T-cell (primary cell): ENCODE measurements at regions of chr4 and their contacts with region 1.

Region 1: GRCh38 chr4:121091941-121092340 is 19.6 kb upstream of the NDNF start:
- DNase-seq: no peak
- ATAC-seq: no peak
- H3K4me3 ChIP-seq: no peak overlapping the region
- H3K4me3 Mint-ChIP-seq: no peak overlapping the region
- H3K27ac ChIP-seq: no peak overlapping the region
- H3K27ac Mint-ChIP-seq: no peak overlapping the region
- H3K4me1 ChIP-seq: no peaks in the 10 kb centered on the region
- H3K4me1 Mint-ChIP-seq: no peaks in the 10 kb centered on the region
- H3K27me3 ChIP-seq: no peaks in the 10 kb centered on the region
- H3K27me3 Mint-ChIP-seq: no peaks in the 10 kb centered on the region

Region 2: GRCh38 chr4:121016630-121017029 is 75.3 kb before region 1 on chr4:
- CTCF ChIA-PET with region 1: no interaction called
- POLR2A ChIA-PET with region 1: no interaction called
- DNase-seq: no peak
- ATAC-seq: no peak
- H3K4me3 ChIP-seq: no peak overlapping the region
- H3K4me3 Mint-ChIP-seq: no peak overlapping the region
- H3K27ac ChIP-seq: no peak overlapping the region
- H3K27ac Mint-ChIP-seq: no peak overlapping the region
- H3K4me1 ChIP-seq: peaks cover 0 to 6% of the 10 kb centered on the region in 2 experiments
- H3K4me1 Mint-ChIP-seq: peaks cover 12 to 24% (median 23%) of the 10 kb centered on the region in 3 donors
- H3K27me3 ChIP-seq: no peaks in the 10 kb centered on the region
- H3K27me3 Mint-ChIP-seq: peaks cover 0 to 6% of the 10 kb centered on the region in 2 donors

Region 3: GRCh38 chr4:121139533-121140222 is 47.7 kb after region 1 on chr4:
- CTCF ChIA-PET with region 1: no interaction called
- POLR2A ChIA-PET with region 1: no interaction called
- DNase-seq: peak in 4 of 35 experiments; percentile 14 to 55 (median 18)
- ATAC-seq: peak; percentile 64 to 89 (median 71)
- H3K4me3 ChIP-seq: no peak overlapping the region
- H3K4me3 Mint-ChIP-seq: peak overlapping the region in 1 of 3 donors; percentile 57
- H3K27ac ChIP-seq: peak overlapping the region; percentile 72
- H3K27ac Mint-ChIP-seq: peak overlapping the region; percentile 88 to 89
- H3K4me1 ChIP-seq: peaks cover 19 to 32% of the 10 kb centered on the region in 2 experiments
- H3K4me1 Mint-ChIP-seq: peaks cover 42 to 63% (median 51%) of the 10 kb centered on the region in 3 donors
- H3K27me3 ChIP-seq: no peaks in the 10 kb centered on the region
- H3K27me3 Mint-ChIP-seq: no peaks in the 10 kb centered on the region

Region 4: GRCh38 chr4:121156822-121157769 is 65.2 kb after region 1 on chr4:
- CTCF ChIA-PET with region 1: interaction called in 1 of 2 experiments, 13 read pairs
- POLR2A ChIA-PET with region 1: no interaction called
- DNase-seq: peak in 21 of 35 experiments; percentile 5 to 51 (median 23)
- ATAC-seq: peak; percentile 11 to 58 (median 38)
- H3K4me3 ChIP-seq: peak overlapping the region; percentile 61 to 88
- H3K4me3 Mint-ChIP-seq: peak overlapping the region; percentile 88 to 97 (median 88)
- H3K27ac ChIP-seq: peak overlapping the region; percentile 73
- H3K27ac Mint-ChIP-seq: peak overlapping the region; percentile 83 to 93
- H3K4me1 ChIP-seq: peaks cover 32 to 50% of the 10 kb centered on the region in 2 experiments
- H3K4me1 Mint-ChIP-seq: peaks cover 48 to 62% (median 54%) of the 10 kb centered on the region in 3 donors
- H3K27me3 ChIP-seq: no peaks in the 10 kb centered on the region
- H3K27me3 Mint-ChIP-seq: no peaks in the 10 kb centered on the region